Posterior cingulate gyrus (tissue), 11 donors: ENCODE measurements at regions of chr2 and their contacts with region 1.

Region 1: GRCh38 chr2:97645695-97646629 is at the start of gene COX5B:
- DNase-seq: peak; percentile 99 to 100 (median 99)

Region 2: GRCh38 chr2:97663965-97664635 is 18.1 kb after region 1 on chr2 and contains the start of gene ACTR1B:
- intact Hi-C with region 1: loop called (anchors 1 kb)
- DNase-seq: peak; percentile 96 to 100 (median 98)

Region 3: DNA sequence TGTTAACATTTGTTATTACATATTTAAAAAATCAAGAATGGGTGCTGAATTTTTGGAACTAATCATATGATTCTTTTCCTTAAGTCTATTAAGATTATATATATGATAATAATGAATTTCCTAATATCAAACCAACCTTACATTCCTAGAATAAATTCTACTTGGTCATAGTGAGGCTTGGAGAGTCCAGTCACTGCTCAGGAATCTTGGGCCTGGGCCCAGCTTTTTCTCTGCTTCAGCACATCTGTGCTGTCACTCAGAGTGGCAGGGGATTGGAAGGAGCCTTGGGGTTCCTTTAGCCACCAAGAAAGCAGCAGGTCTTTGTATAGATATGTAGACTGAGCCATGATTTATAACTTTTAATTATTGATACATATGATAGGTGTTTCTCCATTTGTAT is 47.5 kb after region 1 on chr2:
- intact Hi-C with region 1: no loop called
- DNase-seq: no peak